ENCODE measurements at regions of chr16 and their contacts with region 1.

Region 1: DNA sequence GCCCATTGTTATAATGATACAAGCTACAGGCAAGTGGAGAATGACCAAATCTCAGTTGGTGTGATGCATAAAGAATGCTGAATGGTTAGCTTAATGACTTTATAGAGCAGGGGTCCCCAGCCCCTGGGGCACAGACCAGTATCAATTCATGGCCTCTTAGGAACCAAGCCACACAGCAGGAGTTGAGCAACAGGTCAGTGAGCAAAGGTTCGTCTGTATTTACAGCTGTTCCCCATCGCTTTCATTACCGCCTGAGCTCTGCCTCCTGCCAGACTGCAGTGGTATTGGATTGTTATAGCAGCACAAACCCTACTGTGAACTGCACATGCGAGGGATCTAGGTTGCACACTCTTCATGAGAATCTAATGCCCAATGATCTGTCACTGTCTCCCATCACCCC is 114.0 kb upstream of the ZFHX3 start:
- DNase-seq: peak; percentile 78
- ATAC-seq: no peak; the same call in 1 of the 3 replicates
- H3K4me3 ChIP-seq: no peak overlapping the region
- H3K27ac ChIP-seq: no peak overlapping the region
- H3K4me1 ChIP-seq: peaks cover 9% of the 10 kb centered on the region
- H3K27me3 ChIP-seq: no peaks in the 10 kb centered on the region
- CTCF ChIP-seq: peak; percentile 60
- EP300 ChIP-seq: peak in 1 of 2 experiments; percentile 42; a peak in 1 of 4 replicates
- POLR2A ChIP-seq: no peak
- RAD21 ChIP-seq: peak; percentile 32; the same call in 1 of the 2 replicates

Region 2: DNA sequence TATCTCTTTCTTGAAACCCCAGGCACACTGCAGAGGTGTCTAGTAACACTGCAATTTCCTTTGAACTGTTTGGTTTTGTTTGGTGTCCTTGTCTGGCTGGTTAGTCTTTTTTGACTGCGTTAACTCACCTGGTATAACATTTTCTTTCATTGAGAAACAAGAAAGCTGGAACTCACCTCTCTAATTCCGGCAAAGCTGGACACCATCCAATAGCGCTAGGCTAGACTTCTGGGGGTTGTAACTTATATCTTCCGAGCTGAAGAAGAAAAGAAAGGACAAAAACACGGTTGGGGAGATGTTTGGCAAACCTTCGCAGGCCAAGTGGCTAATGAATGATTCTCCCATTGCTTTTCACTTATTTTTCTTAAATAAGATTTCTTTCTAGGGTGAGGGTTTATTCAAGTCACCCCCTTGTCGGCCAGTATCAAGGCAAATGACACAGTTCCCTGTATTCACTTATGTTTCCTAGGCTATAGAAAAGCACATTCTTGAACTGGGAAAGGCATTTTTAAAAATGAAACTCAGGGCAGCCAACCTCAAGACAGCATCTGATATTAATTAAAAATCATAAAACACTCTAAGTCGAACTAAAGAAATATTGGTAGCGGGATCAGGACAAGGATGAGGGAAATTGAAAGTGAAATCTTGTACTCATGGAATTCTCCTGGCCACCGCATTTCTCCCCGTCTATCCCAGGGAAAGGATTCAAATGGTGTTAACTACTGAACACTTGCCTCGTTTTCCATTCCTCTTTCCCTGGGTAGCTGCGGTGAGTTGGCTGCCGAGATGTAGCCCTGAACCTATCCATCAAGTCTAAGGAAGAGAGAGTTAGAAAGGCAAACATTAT is 18.2 kb before region 1 on chr16:
- CTCF ChIA-PET with region 1: no interaction called
- POLR2A ChIA-PET with region 1: no interaction called
- in situ Hi-C with region 1: no loop called
- intact Hi-C with region 1: loop called (anchors 2 kb)
- DNase-seq: no peak
- ATAC-seq: peak; percentile 30; the same call in 1 of the 3 replicates
- H3K4me3 ChIP-seq: peak overlapping the region in 1 of 3 experiments; percentile 19; a peak in 1 of 6 replicates
- H3K27ac ChIP-seq: no peak overlapping the region
- H3K4me1 ChIP-seq: peaks cover 40% of the 10 kb centered on the region
- H3K27me3 ChIP-seq: peaks cover 0 to 45% of the 10 kb centered on the region in 2 experiments; a peak in 3 of 5 replicates
- CTCF ChIP-seq: no peak
- EP300 ChIP-seq: no peak
- POLR2A ChIP-seq: no peak
- RAD21 ChIP-seq: no peak

Region 3: GRCh38 chr16:73149334-73149733 is 12.6 kb before region 1 on chr16:
- CTCF ChIA-PET with region 1: no interaction called
- POLR2A ChIA-PET with region 1: no interaction called
- in situ Hi-C with region 1: no loop called
- intact Hi-C with region 1: loop called (anchors 1 kb)
- DNase-seq: peak; percentile 39
- ATAC-seq: peak; percentile 71
- H3K4me3 ChIP-seq: peak overlapping the region in 1 of 3 experiments; percentile 33; a peak in 1 of 6 replicates
- H3K27ac ChIP-seq: no peak overlapping the region
- H3K4me1 ChIP-seq: peaks cover 37% of the 10 kb centered on the region
- H3K27me3 ChIP-seq: peaks cover 3 to 19% of the 10 kb centered on the region in 2 experiments; a peak in 4 of 5 replicates
- CTCF ChIP-seq: no peak
- EP300 ChIP-seq: no peak
- POLR2A ChIP-seq: no peak
- RAD21 ChIP-seq: no peak

Region 4: GRCh38 chr16:73176577-73177013 is 14.6 kb after region 1 on chr16:
- CTCF ChIA-PET with region 1: no interaction called
- POLR2A ChIA-PET with region 1: no interaction called
- in situ Hi-C with region 1: no loop called
- intact Hi-C with region 1: no loop called
- DNase-seq: peak; percentile 20
- ATAC-seq: peak; percentile 41; the same call in 1 of the 3 replicates
- H3K4me3 ChIP-seq: no peak overlapping the region
- H3K27ac ChIP-seq: no peak overlapping the region
- H3K4me1 ChIP-seq: peaks cover 7% of the 10 kb centered on the region; the same call in 1 of the 2 replicates
- H3K27me3 ChIP-seq: peaks cover 0 to 6% of the 10 kb centered on the region in 2 experiments; a peak in 1 of 5 replicates
- CTCF ChIP-seq: peak; percentile 44
- EP300 ChIP-seq: no peak
- POLR2A ChIP-seq: no peak
- RAD21 ChIP-seq: no peak